WTC11 (cell line): ENCODE measurements at regions of chr1 and their contacts with region 1.

Region 1: GRCh38 chr1:54800899-54801759 is at the start of gene TTC22:
- DNase-seq: peak; percentile 58
- ATAC-seq: peak; percentile 89
- H3K4me3 Mint-ChIP-seq: peak within 1 kb of the TSS; percentile 31
- H3K27ac Mint-ChIP-seq: no peak within 1 kb of the TSS
- H3K4me1 Mint-ChIP-seq: 0 out of 2 replicates have a peak, but pooled peaks cover 6% of the 10 kb centered on the region
- H3K27me3 Mint-ChIP-seq: peaks cover 13% of the 10 kb centered on the region
- CTCF ChIP-seq: no peak
- total RNA-seq, gene TTC22: 0.63 to 0.99 TPM (median 0.69 TPM) in 3 replicates

Region 2: DNA sequence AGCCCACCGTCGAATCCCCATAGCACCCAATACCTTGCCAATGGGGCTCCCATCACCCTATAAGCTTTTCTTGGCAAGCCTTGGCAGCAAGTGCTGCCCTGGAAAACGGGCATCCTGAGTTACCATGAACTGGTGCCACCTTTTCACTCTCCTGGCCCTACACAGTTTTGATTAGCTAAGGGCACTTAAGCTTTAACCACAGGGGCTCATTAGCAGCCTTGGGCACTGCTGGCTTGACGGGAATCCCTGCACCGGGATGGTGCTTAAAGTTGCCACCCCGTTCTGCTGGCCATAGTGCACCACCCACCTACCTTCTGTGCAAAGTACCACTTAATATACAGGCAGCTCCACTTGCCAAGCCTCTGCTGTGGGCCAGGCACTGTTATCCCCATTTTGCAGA is 50.5 kb before region 1 on chr1:
- CTCF ChIA-PET with region 1: interaction called, 16 read pairs
- POLR2A ChIA-PET with region 1: no interaction called
- DNase-seq: no peak
- ATAC-seq: no peak
- H3K4me3 Mint-ChIP-seq: no peak overlapping the region
- H3K27ac Mint-ChIP-seq: no peak overlapping the region
- H3K4me1 Mint-ChIP-seq: peaks cover 18% of the 10 kb centered on the region
- H3K27me3 Mint-ChIP-seq: no peaks in the 10 kb centered on the region; the same call in 1 of the 2 replicates
- CTCF ChIP-seq: no peak

Region 3: GRCh38 chr1:54781023-54781723 is 20.0 kb before region 1 on chr1:
- CTCF ChIA-PET with region 1: interaction called, 18 read pairs
- POLR2A ChIA-PET with region 1: no interaction called
- DNase-seq: peak; percentile 64
- ATAC-seq: peak; percentile 82
- H3K4me3 Mint-ChIP-seq: peak overlapping the region; percentile 52
- H3K27ac Mint-ChIP-seq: no peak overlapping the region
- H3K4me1 Mint-ChIP-seq: peaks cover 5% of the 10 kb centered on the region; the same call in 1 of the 2 replicates
- H3K27me3 Mint-ChIP-seq: peaks cover 54% of the 10 kb centered on the region
- CTCF ChIP-seq: no peak

Region 4: GRCh38 chr1:54812801-54813484 is 11.8 kb after region 1 on chr1:
- CTCF ChIA-PET with region 1: interaction called, 11 read pairs
- POLR2A ChIA-PET with region 1: no interaction called
- DNase-seq: no peak
- ATAC-seq: no peak
- H3K4me3 Mint-ChIP-seq: peak overlapping the region; percentile 29
- H3K27ac Mint-ChIP-seq: no peak overlapping the region
- H3K4me1 Mint-ChIP-seq: peaks cover 27% of the 10 kb centered on the region
- H3K27me3 Mint-ChIP-seq: peaks cover 7% of the 10 kb centered on the region; the same call in 1 of the 2 replicates
- CTCF ChIP-seq: no peak